Sigmoid colon (tissue), 7 donors: ENCODE measurements at regions of chr2 and their contacts with region 1.

Region 1: DNA sequence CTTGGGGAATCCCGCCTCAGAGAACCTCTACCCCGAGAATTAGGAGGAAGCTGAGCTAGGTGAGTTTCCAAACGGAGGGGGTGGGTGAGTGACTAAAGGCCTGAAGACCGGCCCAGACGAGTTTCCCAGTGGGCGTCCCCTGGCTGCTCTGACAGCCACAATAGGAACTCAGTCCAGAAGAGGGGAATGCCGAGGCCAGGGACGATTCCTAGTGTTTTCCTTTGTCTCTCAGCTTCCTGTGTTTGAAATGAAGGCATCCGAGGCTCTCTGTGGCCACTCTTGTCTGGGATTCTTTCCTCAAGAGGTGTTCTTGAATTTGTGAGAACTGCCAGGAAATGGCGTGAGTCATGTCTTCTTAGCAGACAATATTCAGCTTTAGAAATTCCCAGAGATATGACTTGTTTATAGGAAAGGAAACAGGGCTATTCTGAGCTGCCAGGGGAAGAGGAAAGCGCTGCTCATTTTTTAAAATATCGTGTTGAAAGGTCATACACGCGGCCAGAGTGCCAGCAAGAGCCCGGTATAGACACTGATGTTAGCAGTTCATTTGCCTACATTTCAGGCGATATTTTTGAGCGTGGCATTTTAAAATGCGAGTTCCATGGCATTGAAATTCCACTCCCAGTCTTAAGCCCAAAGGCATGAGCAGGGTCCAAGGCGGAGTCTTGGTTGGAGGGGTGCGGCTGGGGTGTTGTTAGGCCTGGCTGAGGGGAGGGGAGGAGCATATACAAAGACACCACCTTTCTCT is 169.1 kb upstream of the KLF7 start:
- DNase-seq: peak; percentile 88
- H3K4me3 ChIP-seq: peak overlapping the region in 2 of 4 donors; percentile 21 to 35
- H3K27ac ChIP-seq: peak overlapping the region; percentile 65 to 87 (median 83)
- H3K4me1 ChIP-seq: peaks cover 0 to 25% (median 19%) of the 10 kb centered on the region in 4 donors
- H3K27me3 ChIP-seq: no peaks in the 10 kb centered on the region
- CTCF ChIP-seq: no peak
- EP300 ChIP-seq: peak; percentile 16 to 79 (median 61)
- POLR2A ChIP-seq: no peak

Region 2: DNA sequence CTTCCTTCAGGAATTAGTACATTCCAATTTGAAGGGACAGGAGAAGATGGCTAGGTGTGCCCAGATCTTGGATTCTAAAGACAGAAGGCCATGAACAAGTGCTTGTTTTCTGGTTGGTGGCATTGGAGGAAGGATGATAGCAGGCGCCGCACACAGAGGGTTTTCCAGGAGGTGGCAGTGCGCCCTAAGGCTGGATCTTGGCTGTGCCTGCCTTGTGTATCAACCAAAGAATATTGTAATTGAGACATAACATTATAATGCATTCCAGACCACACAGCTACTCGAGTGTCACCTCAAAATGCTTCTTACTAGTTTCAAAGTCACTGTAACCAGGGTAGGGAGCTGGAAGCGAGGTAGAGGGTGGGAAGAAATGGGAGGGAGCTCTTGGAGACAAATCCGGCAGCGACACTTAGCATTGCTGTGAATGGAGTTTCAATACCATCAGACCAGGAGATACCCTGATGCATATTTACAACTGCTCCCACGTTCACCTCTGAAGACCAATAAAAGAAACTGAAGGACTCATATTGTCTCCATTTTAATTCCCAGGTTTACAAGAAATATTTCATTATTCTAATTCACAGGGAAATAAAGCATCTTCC is 353.0 kb before region 1 on chr2:
- intact Hi-C with region 1: loop called (anchors 10 kb)
- DNase-seq: peak; percentile 88
- H3K4me3 ChIP-seq: no peak overlapping the region
- H3K27ac ChIP-seq: peak overlapping the region in 1 of 4 donors; percentile 32
- H3K4me1 ChIP-seq: peaks cover 0 to 32% (median 18%) of the 10 kb centered on the region in 4 donors
- H3K27me3 ChIP-seq: no peaks in the 10 kb centered on the region
- CTCF ChIP-seq: peak; percentile 60 to 85 (median 82)
- EP300 ChIP-seq: peak in 1 of 4 donors; percentile 9
- POLR2A ChIP-seq: no peak